Transverse colon (tissue), 4 donors: ENCODE measurements at regions of chr9 and their contacts with region 1.

Region 1: DNA sequence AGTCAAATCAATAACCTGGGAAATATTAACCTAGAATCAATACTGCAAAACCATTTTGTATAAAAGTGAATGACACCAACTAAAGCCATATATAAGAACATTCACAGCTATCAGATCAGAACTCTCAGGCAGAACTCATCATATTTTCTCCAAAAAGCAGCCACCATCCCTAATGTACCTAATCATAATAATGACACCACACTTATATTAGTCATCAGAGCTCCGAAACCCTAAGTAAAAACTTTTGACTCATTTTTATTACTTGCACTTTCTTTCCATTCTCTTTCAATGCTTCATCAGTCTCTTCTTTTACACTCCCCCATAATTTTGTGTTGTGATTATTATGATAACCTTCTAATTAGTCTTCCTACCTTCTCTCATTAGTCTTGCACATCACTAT is 45.3 kb downstream of the INSL6 start:
- DNase-seq: no peak
- H3K4me3 ChIP-seq: no peak overlapping the region
- H3K27ac ChIP-seq: no peak overlapping the region
- H3K4me1 ChIP-seq: no peaks in the 10 kb centered on the region
- H3K27me3 ChIP-seq: no peaks in the 10 kb centered on the region
- CTCF ChIP-seq: no peak
- EP300 ChIP-seq: no peak
- POLR2A ChIP-seq: no peak

Region 2: GRCh38 chr9:3331817-3332216 is 1808.3 kb before region 1 on chr9:
- in situ Hi-C with region 1: no loop called
- intact Hi-C with region 1: loop called (anchors 10 kb)
- DNase-seq: no peak
- H3K4me3 ChIP-seq: no peak overlapping the region
- H3K27ac ChIP-seq: no peak overlapping the region
- H3K4me1 ChIP-seq: peaks cover 0 to 7% (median 0%) of the 10 kb centered on the region in 4 donors
- H3K27me3 ChIP-seq: no peaks in the 10 kb centered on the region
- CTCF ChIP-seq: peak in 2 of 5 experiments; percentile 7 to 8
- EP300 ChIP-seq: no peak
- POLR2A ChIP-seq: no peak

Region 3: GRCh38 chr9:4262735-4263141 is 877.4 kb before region 1 on chr9:
- in situ Hi-C with region 1: no loop called
- intact Hi-C with region 1: loop called (anchors 5 kb)
- DNase-seq: no peak
- H3K4me3 ChIP-seq: no peak overlapping the region
- H3K27ac ChIP-seq: no peak overlapping the region
- H3K4me1 ChIP-seq: no peaks in the 10 kb centered on the region
- H3K27me3 ChIP-seq: no peaks in the 10 kb centered on the region
- CTCF ChIP-seq: no peak
- EP300 ChIP-seq: no peak
- POLR2A ChIP-seq: no peak

Region 4: GRCh38 chr9:4640027-4640426 is 500.1 kb before region 1 on chr9:
- in situ Hi-C with region 1: no loop called
- intact Hi-C with region 1: no loop called
- DNase-seq: peak; percentile 14
- H3K4me3 ChIP-seq: no peak overlapping the region
- H3K27ac ChIP-seq: no peak overlapping the region
- H3K4me1 ChIP-seq: no peaks in the 10 kb centered on the region
- H3K27me3 ChIP-seq: no peaks in the 10 kb centered on the region
- CTCF ChIP-seq: peak; percentile 33 to 44 (median 40)
- EP300 ChIP-seq: no peak
- POLR2A ChIP-seq: no peak

Region 5: GRCh38 chr9:5013374-5013773 is 126.8 kb before region 1 on chr9:
- in situ Hi-C with region 1: no loop called
- intact Hi-C with region 1: no loop called
- DNase-seq: no peak
- H3K4me3 ChIP-seq: no peak overlapping the region
- H3K27ac ChIP-seq: peak overlapping the region in 3 of 4 donors; percentile 9 to 47 (median 20)
- H3K4me1 ChIP-seq: peaks cover 0 to 18% (median 7%) of the 10 kb centered on the region in 4 donors
- H3K27me3 ChIP-seq: no peaks in the 10 kb centered on the region
- CTCF ChIP-seq: no peak
- EP300 ChIP-seq: peak; percentile 12
- POLR2A ChIP-seq: no peak

Region 6: GRCh38 chr9:5188060-5188984 is 48.2 kb after region 1 on chr9:
- in situ Hi-C with region 1: no loop called
- intact Hi-C with region 1: no loop called
- DNase-seq: no peak
- H3K4me3 ChIP-seq: no peak overlapping the region
- H3K27ac ChIP-seq: no peak overlapping the region
- H3K4me1 ChIP-seq: no peaks in the 10 kb centered on the region
- H3K27me3 ChIP-seq: no peaks in the 10 kb centered on the region
- CTCF ChIP-seq: no peak
- EP300 ChIP-seq: no peak
- POLR2A ChIP-seq: no peak

Region 7: GRCh38 chr9:5696884-5697283 is 556.7 kb after region 1 on chr9:
- in situ Hi-C with region 1: no loop called
- intact Hi-C with region 1: no loop called
- DNase-seq: no peak
- H3K4me3 ChIP-seq: no peak overlapping the region
- H3K27ac ChIP-seq: no peak overlapping the region
- H3K4me1 ChIP-seq: peaks cover 0 to 4% (median 0%) of the 10 kb centered on the region in 4 donors
- H3K27me3 ChIP-seq: no peaks in the 10 kb centered on the region
- CTCF ChIP-seq: no peak
- EP300 ChIP-seq: no peak
- POLR2A ChIP-seq: no peak